ENCODE measurements at regions of chr4 and their contacts with region 1.

Region 1: GRCh38 chr4:40325189-40326019 is 9.7 kb upstream of the CHRNA9 start:
- DNase-seq: peak; percentile 77
- ATAC-seq: peak; percentile 98
- H3K4me3 Mint-ChIP-seq: no peak overlapping the region
- H3K27ac Mint-ChIP-seq: peak overlapping the region; percentile 36
- H3K4me1 Mint-ChIP-seq: peaks cover 35% of the 10 kb centered on the region
- H3K27me3 Mint-ChIP-seq: peaks cover 3% of the 10 kb centered on the region
- CTCF ChIP-seq: peak; percentile 94

Region 2: DNA sequence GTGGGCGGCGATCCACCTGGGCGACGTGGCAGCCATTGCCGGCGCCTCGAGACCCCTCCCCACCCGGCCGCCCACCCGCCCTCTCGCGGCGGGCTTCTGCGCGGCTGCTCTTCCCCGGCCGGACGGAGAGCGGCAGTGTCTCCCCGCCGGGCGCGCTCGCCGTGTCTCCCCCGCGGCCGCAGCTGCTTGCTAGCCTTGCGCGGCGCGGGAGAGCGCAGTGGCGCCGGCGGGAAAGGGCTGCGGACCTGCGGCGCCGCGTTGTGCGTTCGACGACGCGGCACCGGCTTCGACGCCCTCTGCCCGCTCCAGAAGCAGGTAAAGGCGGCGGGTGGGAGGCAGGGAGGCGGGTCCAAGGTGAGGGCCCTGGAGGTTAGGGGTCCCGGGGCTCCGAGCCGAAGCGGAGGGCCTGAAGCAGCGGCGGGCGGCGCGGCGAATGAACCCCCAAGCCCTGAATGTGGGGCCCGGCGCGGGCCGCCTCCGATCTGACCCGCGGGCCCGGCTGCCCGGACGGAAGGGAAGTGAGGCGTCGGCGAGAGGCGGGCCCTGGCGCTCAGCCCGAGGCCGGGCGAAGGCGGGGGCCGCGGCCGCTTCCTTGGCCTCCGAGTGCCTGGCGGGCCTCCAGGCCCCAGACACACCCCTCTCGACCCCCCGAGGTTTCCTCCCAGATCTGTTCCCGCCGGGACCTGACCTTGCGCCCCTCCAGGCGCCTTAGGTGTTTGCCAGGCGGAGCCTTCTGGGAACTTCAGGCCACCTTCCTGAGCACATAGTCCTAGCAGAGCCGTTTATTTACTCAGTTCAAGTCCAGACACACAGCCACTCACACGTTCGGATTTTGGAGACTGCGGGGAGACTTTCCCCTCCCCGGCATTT is 268.5 kb before region 1 on chr4 and contains the start of gene N4BP2:
- CTCF ChIA-PET with region 1: interaction called, 10 read pairs
- POLR2A ChIA-PET with region 1: interaction called, 3 read pairs
- intact Hi-C with region 1: no loop called
- DNase-seq: peak; percentile 77
- ATAC-seq: peak; percentile 59
- H3K4me3 Mint-ChIP-seq: peak within 1 kb of the TSS; percentile 96
- H3K27ac Mint-ChIP-seq: peak within 1 kb of the TSS; percentile 97
- H3K4me1 Mint-ChIP-seq: peaks cover 32% of the 10 kb centered on the region
- H3K27me3 Mint-ChIP-seq: peaks cover 6% of the 10 kb centered on the region
- CTCF ChIP-seq: peak; percentile 75
- total RNA-seq, gene N4BP2: 17.4 to 17.5 TPM

Region 3: DNA sequence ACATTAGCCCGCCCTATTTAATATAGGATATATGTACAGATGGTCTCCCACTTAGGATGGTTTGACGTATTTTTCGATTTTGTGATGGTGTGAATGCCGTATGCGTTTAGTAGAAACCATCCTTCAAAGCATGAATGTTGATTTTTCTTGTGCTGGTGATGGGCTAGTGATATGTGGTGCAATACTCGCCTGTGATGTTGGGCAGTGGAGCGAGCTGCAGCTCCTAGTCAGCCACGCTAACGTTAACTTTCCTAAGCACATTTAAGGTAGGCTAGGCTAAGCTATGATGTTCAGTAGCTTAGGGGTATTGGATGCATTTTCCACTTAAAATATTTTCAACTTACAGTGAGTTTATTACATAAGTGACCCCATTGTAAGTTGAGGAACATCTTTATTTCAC is 165.1 kb before region 1 on chr4:
- CTCF ChIA-PET with region 1: interaction called, 12 read pairs
- POLR2A ChIA-PET with region 1: no interaction called
- intact Hi-C with region 1: no loop called
- DNase-seq: no peak
- ATAC-seq: no peak
- H3K4me3 Mint-ChIP-seq: no peak overlapping the region
- H3K27ac Mint-ChIP-seq: no peak overlapping the region
- H3K4me1 Mint-ChIP-seq: peaks cover 9% of the 10 kb centered on the region
- H3K27me3 Mint-ChIP-seq: no peaks in the 10 kb centered on the region
- CTCF ChIP-seq: no peak

Region 4: DNA sequence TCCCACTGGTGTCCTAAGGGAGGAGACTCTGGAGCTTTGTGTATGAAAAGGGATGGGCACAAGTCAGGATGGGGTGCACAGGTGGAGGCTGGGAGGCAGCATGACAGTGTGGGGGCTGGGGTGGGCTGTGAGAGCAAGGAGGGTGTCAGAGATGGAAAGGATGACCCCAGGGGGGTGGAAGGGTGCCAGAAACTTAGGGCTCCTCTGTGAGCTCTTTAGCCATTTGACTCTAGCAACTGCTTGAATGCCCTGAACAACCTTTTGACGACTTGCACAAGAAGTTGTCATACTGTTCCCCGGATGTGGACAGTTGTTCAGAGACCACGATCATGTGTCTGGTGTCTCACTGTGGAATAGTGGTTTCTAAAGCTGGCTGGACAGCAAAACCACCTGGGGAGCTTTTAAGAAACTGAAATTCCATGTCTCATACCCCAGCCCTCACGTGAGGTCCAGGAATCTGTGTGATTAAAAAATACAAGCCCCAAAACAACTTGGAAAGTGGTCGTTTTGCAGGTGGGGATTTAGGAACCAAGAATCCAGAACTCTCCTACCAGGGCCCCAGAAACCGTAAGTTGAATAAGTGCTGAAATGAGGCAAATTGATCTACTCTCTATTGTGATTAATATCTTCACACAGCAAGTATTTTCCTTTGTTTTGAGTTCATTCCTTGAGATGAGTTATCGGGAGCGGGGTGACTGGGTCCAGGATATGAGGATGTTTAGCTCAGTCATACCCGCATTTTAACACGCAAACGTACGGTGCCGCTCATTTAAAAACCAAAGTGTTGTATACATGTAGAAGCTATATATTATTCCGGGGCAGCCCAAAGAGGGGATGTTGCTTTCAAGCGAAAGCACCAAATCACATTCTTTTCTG is 125.2 kb before region 1 on chr4:
- CTCF ChIA-PET with region 1: interaction called, 12 read pairs
- POLR2A ChIA-PET with region 1: interaction called, 326 read pairs
- intact Hi-C with region 1: no loop called
- DNase-seq: peak; percentile 94
- ATAC-seq: peak; percentile 50
- H3K4me3 Mint-ChIP-seq: peak overlapping the region; percentile 99
- H3K27ac Mint-ChIP-seq: peak overlapping the region; percentile 99
- H3K4me1 Mint-ChIP-seq: peaks cover 23% of the 10 kb centered on the region
- H3K27me3 Mint-ChIP-seq: no peaks in the 10 kb centered on the region
- CTCF ChIP-seq: no peak

Region 5: DNA sequence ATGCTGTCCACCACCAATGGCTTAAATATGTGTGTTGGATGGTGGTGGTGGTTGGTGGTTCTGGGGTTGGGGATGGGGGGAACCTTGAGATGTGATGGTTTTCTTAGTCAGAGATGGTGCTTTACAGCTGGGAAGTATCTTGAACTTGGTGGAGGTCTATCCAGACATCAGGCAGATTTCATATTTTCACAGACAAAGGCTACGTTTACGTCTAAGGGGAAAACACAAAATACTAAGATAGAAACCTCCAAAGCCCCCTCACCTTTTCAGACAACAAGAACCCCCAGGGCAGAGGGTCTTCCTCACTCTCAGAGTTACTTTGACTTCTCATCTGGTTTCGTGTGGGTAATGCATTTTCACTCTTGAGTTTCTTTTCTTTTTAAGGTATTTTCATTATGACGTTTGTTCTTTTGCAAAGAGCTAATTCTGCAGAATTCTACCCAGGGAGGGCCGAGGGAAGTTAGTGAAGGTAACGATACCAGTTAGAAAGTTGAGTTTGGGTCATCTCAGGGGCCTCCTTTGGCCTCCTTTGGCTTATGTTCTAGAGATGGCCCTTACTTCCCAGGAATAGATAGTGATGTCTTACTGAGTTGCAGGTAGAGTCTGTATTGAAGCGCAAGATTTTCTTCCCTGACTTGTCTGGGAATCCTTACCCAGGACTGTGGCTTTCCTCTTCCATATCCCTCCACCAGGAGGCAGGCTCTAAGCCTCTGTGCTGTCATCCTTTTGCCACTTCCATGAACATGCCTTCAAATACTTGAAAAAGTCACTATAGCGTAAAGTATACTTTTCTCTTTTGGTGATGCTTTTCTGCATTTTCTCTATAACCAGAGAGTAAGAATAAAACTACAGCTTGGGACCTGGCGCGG is 96.7 kb before region 1 on chr4:
- CTCF ChIA-PET with region 1: interaction called, 17 read pairs
- POLR2A ChIA-PET with region 1: interaction called, 4 read pairs
- intact Hi-C with region 1: no loop called
- DNase-seq: peak; percentile 74
- ATAC-seq: peak; percentile 35
- H3K4me3 Mint-ChIP-seq: peak overlapping the region; percentile 64
- H3K27ac Mint-ChIP-seq: peak overlapping the region; percentile 96
- H3K4me1 Mint-ChIP-seq: peaks cover 86% of the 10 kb centered on the region
- H3K27me3 Mint-ChIP-seq: no peaks in the 10 kb centered on the region
- CTCF ChIP-seq: peak; percentile 70

Measured in activated CD8-positive, alpha-beta T cell treated with anti-CD3 and anti-CD28 coated beads for 36 hours (primary cell).